SK-N-SH (cell line): ENCODE measurements at regions of chr3 and their contacts with region 1.

Region 1: DNA sequence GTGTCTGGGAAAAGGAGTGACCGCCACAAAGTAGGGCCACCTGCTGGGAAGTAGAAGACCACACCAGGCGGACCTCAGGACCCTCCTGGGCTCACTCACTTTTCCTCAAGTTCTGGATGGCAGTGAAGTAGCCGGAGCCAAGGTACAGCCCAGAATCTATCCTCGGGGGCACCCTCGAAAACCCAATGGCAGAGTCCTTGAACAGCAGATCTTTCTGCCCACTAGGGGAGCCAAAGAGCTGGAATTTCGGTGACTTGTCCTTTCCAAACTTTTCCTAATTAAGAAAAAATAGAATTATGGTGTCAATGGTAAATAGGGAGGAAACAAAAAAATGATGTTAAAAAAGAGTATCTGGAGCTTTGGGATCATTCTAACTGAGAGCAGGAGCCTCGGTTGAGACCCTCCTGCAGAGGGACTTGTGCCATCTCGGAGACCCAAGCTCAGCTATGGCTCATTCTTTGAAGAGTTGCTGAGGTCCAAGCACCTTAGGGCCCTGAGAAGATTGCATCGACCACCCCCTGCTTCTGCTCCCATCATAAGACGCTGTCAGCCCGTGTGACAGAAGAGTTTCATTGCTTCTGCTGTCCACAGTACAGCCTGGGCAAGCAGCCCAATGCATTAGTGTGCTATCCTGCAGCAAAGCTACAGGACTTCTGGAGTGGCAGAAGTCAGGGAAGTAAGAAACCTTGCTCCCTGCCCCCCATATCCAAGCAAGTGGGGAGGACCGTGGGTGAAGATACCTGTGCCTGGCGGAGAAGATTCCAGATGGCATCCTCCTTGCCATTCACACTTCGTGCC is 14.8 kb downstream of the LTF start:
- DNase-seq: peak; percentile 58
- H3K4me3 ChIP-seq: no peak overlapping the region
- H3K27ac ChIP-seq: no peak overlapping the region
- H3K4me1 ChIP-seq: no peaks in the 10 kb centered on the region
- H3K27me3 ChIP-seq: 0 out of 2 replicates have a peak, but pooled peaks cover 8% of the 10 kb centered on the region
- CTCF ChIP-seq: peak; percentile 65
- EP300 ChIP-seq: no peak
- RAD21 ChIP-seq: no peak

Region 2: GRCh38 chr3:46423588-46423987 is 26.4 kb before region 1 on chr3:
- CTCF ChIA-PET with region 1: interaction called, 12 read pairs
- POLR2A ChIA-PET with region 1: no interaction called
- DNase-seq: no peak
- H3K4me3 ChIP-seq: no peak overlapping the region
- H3K27ac ChIP-seq: no peak overlapping the region
- H3K4me1 ChIP-seq: no peaks in the 10 kb centered on the region
- H3K27me3 ChIP-seq: no peaks in the 10 kb centered on the region
- CTCF ChIP-seq: no peak
- EP300 ChIP-seq: no peak
- RAD21 ChIP-seq: no peak

Region 3: GRCh38 chr3:46462111-46462510 is 12.2 kb after region 1 on chr3:
- CTCF ChIA-PET with region 1: interaction called, 13 read pairs
- POLR2A ChIA-PET with region 1: no interaction called
- DNase-seq: no peak
- H3K4me3 ChIP-seq: no peak overlapping the region
- H3K27ac ChIP-seq: no peak overlapping the region
- H3K4me1 ChIP-seq: no peaks in the 10 kb centered on the region; a peak in 1 of 4 replicates
- H3K27me3 ChIP-seq: peaks cover 25% of the 10 kb centered on the region
- CTCF ChIP-seq: 0 out of 2 replicates have a peak, but pooled peaks have one; percentile 11
- EP300 ChIP-seq: no peak
- RAD21 ChIP-seq: no peak